PC-9 (cell line): ENCODE measurements at regions of chr11 and their contacts with region 1.

Region 1: DNA sequence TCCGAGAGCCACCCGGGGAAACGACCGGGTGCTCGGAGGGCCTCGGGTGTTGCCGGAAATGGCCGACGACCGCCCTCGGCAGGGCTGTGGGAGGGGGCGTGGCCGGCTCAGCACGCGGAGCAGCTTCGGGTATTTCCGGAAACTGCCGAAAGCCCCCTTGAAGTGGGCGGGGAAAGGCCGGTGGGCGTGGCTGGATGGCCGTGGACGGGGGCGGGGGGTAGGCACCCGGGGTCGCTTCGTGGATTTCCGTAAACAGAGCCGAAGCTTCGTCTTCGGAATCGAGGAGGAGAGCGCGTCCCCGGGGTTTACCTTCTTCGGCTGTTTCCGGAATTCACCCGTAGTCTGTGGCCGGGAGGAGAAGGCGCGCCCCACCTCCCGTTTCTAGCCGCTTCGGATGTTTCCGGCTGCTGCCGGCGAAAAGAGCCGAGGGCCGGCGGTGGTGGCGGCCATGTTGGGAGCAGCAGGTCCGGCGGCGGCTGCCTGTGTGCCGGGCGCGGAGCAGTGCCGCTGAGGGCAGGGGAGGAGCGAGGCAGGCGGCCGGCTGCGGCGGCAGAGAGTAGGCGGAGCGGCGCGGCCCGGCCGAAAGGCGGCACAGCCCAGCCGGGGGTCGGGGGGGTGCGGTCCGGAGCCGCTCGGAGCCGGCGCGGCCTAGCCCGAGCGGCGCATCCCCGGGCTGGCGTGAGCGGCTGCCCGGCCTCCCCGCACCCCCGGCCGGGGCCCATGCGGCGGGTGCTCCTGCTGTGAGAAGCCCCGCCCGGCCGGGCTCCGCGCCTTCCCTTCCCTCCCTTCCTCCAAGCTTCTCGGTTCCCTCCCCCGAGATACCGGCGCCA is at the start of gene MARK2:
- DNase-seq: peak; percentile 96 to 99
- H3K4me3 ChIP-seq: peak within 1 kb of the TSS; percentile 90
- H3K27ac ChIP-seq: peak within 1 kb of the TSS; percentile 39
- H3K4me1 ChIP-seq: peaks cover 53% of the 10 kb centered on the region
- H3K27me3 ChIP-seq: no peaks in the 10 kb centered on the region
- CTCF ChIP-seq: no peak
- total RNA-seq, gene MARK2: 53.8 and 65.0 TPM in 2 replicates

Region 2: DNA sequence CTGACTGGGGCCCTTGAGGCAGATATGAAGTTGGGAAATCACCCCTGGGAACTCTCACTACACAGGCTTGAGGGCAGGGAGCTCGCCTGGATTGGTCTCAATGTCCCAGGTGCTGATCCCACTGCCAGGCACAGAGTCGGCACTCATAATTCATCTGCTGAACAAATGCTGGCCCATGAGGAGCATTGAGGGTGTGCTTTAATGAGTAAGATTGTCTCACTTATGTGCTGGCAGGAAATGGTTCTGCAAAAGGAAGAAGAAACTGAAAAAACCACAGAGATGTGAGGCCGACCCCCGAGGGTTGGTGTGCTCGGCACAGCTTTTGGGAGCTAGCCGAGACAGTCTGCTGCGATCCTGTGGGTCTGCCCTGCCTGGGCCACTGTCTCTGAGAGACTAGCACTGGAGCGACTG is 285.1 kb before region 1 on chr11:
- CTCF ChIA-PET with region 1: no interaction called
- POLR2A ChIA-PET with region 1: no interaction called
- intact Hi-C with region 1: no loop called
- DNase-seq: no peak
- H3K4me3 ChIP-seq: no peak overlapping the region
- H3K27ac ChIP-seq: no peak overlapping the region
- H3K4me1 ChIP-seq: peaks cover 7% of the 10 kb centered on the region
- H3K27me3 ChIP-seq: no peaks in the 10 kb centered on the region
- CTCF ChIP-seq: no peak

Region 3: DNA sequence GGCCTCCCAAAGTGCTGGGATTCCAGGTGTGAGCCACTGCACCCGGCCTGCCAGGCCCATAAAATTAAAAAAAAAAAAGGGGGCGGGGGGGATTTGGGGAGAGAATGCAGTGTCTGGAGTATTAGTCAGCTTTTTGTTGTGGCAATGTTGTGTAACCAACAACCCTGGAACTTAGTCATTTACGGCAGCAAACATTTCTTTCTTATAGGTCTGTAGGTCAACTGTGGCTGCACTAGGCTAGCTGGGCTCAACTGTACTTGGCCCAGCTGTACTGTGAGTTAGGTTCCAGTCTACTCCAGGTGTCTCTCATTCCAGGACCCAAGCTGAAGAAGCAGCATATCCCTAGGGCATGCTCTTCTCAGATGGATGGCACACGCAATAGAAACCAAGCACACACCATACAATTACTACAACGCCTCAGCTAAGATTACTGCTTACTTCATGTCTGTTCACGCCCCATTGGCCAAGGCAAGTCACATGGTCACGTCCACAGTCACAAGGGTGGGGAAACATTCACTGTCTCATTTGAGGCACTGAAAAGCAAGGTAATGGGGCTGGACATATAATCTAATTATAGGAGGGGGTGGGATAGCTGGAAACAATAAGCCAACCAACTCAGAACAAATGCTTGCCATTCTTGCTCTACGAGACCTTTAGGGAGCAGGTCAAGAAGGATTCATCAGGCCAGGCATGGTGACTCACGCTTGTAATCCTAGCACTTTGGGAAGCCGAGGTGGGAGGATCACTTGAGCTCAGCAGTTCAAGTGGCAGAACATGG is 36.1 kb before region 1 on chr11:
- CTCF ChIA-PET with region 1: interaction called, 11 read pairs
- POLR2A ChIA-PET with region 1: interaction called, 4 read pairs
- intact Hi-C with region 1: no loop called
- DNase-seq: peak; percentile 81 to 95
- H3K4me3 ChIP-seq: peak overlapping the region; percentile 25; the same call in 1 of the 2 replicates
- H3K27ac ChIP-seq: peak overlapping the region; percentile 89
- H3K4me1 ChIP-seq: peaks cover 46% of the 10 kb centered on the region
- H3K27me3 ChIP-seq: no peaks in the 10 kb centered on the region
- CTCF ChIP-seq: no peak

Region 4: DNA sequence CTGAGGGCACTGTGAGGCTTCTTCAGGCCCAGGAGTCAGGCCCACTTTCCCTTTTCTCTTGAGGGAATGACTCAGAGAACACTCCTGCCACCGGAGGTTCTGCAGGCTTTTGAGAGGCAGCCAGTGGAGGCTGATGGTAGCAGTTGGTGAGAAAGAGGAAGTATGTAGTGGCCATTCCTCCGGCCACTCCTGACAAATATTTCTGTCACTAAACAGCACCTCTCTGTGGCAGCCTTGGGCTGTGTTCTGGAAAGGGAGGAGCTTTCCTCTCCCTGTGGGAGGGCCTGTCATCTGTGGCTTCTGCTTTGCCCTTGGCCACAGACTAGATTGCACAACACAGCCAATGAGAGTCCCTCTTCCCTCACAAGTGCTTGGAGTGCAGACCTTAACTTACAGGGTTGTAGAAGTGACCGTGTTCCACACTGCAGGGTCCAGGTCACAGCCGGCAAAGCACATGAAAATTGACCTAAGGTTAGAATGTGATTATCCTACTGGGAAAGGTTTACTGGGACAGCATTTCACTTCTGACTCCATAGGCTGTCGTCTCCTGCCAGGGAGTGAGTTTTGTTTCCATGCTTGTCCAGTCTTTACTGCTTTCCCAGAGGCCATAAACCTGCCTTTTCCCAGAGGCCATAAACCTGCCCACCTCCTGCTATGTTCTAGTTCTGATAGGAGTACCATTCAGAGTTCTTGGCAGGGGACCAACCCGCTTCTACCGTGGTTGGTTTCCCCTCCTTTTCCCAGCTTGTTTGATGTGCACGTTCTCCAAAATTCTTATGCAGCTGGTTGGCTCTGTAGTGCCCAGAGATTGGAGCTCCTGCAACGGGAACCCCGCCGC is 33.3 kb after region 1 on chr11:
- CTCF ChIA-PET with region 1: interaction called, 12 read pairs
- POLR2A ChIA-PET with region 1: no interaction called
- intact Hi-C with region 1: loop called (anchors 1 kb)
- DNase-seq: peak; percentile 93 to 99
- H3K4me3 ChIP-seq: peak overlapping the region; percentile 23; the same call in 1 of the 2 replicates
- H3K27ac ChIP-seq: peak overlapping the region; percentile 39
- H3K4me1 ChIP-seq: peaks cover 66% of the 10 kb centered on the region
- H3K27me3 ChIP-seq: no peaks in the 10 kb centered on the region
- CTCF ChIP-seq: peak; percentile 62

Region 5: GRCh38 chr11:63888170-63889086 is 49.5 kb after region 1 on chr11:
- CTCF ChIA-PET with region 1: interaction called, 5 read pairs
- POLR2A ChIA-PET with region 1: no interaction called
- intact Hi-C with region 1: loop called (anchors 1 kb)
- DNase-seq: peak; percentile 76 to 92
- H3K4me3 ChIP-seq: peak overlapping the region; percentile 58
- H3K27ac ChIP-seq: peak overlapping the region; percentile 95
- H3K4me1 ChIP-seq: peaks cover 36% of the 10 kb centered on the region
- H3K27me3 ChIP-seq: no peaks in the 10 kb centered on the region
- CTCF ChIP-seq: no peak

Region 6: DNA sequence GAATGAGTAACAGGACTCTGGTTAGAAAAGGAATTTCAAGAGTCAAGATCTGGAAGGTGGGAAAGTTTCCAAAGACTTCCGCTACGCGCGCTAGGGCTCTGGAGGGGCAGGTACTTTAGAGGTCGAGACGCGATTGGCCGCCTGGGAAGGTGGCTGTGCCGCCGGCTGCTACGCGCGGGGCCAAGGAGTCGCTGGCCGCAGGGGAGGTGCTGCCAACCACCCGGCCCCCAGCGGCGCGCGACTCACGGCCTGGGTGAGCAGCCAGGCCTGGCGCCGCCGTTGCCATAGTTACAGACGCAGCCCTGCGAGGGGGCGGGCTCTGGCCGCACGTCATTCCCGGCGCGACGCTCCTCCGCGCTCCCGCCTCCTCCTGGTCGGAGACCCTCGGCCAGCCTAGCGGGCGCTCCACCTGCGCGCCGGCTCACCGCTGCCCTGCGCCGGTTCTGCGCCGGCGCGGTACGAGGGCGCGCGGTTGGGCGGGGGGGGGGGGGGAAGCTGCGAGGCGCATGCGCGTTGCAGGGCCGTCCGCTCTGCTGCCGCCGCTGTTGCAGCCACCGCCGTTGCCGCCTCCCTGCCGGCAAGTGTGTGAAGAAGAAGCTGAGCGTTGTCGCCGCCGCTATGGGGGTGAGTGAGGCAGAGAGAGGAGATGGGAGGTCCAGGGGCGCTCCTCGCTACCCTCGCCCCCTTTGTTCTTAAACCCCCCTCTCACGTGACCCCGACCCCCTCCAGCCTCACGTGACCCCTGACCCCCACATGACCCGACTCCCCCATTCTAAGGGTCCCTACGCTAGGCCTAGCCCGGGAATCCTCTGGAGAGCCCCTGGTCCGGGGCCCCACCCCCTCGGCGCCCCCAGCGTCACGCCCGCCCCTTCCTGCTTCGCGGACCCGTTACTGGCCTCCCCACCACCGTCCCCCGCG is 99.8 kb after region 1 on chr11 and contains the start of gene NAA40:
- CTCF ChIA-PET with region 1: interaction called, 15 read pairs
- POLR2A ChIA-PET with region 1: interaction called, 10 read pairs
- intact Hi-C with region 1: loop called (anchors 2 kb)
- DNase-seq: peak; percentile 97 to 99
- H3K4me3 ChIP-seq: peak within 1 kb of the TSS; percentile 77
- H3K27ac ChIP-seq: peak within 1 kb of the TSS; percentile 83
- H3K4me1 ChIP-seq: peaks cover 44% of the 10 kb centered on the region
- H3K27me3 ChIP-seq: no peaks in the 10 kb centered on the region
- CTCF ChIP-seq: no peak
- total RNA-seq, gene NAA40: 47.4 and 50.4 TPM in 2 replicates

Region 7: DNA sequence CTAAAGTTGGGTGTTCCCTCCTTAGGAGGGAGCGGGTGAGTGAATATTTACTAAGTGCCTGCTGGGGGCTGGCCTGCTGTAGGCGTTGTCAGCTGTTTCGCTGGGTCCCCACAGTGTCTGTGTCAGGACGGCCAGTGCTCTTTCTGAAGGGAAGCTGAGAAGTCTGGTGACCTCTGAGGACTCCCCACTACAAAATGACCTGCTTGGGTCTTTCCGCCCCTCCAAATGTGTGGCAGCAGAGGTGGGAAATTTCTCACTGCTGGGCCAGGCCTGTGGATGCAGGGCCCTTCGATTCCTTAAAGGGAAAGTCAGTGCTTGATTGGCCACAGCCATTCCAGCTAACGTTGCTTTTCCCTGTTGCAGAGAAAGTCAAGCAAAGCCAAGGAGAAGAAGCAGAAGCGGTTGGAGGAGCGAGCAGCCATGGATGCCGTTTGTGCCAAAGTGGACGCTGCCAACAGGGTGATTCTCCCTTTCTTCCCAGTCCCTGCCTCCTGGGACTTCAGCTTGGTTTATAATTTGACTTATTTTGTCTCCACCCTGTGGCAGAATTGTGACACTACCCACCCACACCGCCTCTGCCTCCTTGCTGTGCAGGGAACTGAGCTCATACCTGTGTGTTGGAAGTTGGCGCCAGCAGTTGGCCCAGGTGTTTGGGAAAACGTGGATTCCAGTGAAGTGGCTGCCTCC is 106.7 kb after region 1 on chr11:
- CTCF ChIA-PET with region 1: interaction called, 35 read pairs
- POLR2A ChIA-PET with region 1: no interaction called
- intact Hi-C with region 1: loop called (anchors 1 kb)
- DNase-seq: peak; percentile 66 to 74
- H3K4me3 ChIP-seq: no peak overlapping the region
- H3K27ac ChIP-seq: no peak overlapping the region
- H3K4me1 ChIP-seq: peaks cover 7% of the 10 kb centered on the region; the same call in 1 of the 2 replicates
- H3K27me3 ChIP-seq: no peaks in the 10 kb centered on the region
- CTCF ChIP-seq: peak; percentile 83

Region 8: DNA sequence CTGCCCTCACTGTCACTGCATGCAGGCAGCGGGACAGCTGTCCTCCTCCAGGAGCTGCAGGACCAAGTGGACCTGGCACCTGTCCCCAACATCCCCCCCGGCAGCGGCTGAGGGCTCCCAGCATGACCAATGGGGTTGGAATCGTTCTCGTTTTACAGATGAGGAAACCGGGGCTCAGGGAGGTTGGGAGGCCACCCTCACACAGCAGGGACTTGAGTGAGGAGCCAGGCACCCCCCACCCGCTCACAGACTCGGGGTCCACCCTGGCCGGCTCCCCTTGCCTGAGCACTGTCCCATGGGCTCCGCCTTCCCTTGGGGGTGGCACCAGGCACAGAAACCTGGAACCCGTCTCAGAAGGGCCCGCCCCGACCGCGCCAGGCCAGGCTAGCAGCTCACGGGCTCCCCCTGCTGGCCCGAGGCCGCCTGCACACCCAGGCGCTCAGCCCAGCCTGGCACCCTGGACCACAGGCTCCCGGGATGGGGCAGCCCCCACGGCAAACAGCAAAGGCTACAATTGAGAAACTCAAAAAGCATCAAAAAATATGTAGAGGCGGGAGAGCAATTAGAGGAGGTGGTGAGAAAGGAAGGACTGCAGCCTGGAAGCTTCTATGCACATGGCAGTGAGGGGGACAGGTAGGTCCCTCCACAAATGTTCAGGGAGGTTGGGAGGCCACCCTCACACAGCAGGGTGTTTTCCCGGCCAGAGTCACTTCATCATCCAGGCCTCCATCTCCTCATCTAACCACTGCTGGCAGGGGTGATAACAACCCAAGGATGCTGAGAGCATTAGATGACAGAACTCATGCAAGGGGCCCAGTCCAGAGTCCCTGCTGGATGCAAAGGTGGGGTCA is 314.2 kb after region 1 on chr11:
- CTCF ChIA-PET with region 1: no interaction called
- POLR2A ChIA-PET with region 1: no interaction called
- intact Hi-C with region 1: loop called (anchors 1 kb)
- DNase-seq: peak in 1 of 2 experiments; percentile 78
- H3K4me3 ChIP-seq: no peak overlapping the region
- H3K27ac ChIP-seq: no peak overlapping the region
- H3K4me1 ChIP-seq: no peaks in the 10 kb centered on the region
- H3K27me3 ChIP-seq: no peaks in the 10 kb centered on the region
- CTCF ChIP-seq: peak; percentile 100